ENCODE measurements at regions of chr11 and their contacts with region 1.

Region 1: GRCh38 chr11:35237860-35238715 is 99.1 kb downstream of the CD44 start:
- DNase-seq: peak; percentile 35
- ATAC-seq: peak; percentile 70
- H3K4me3 ChIP-seq: no peak overlapping the region
- H3K27ac ChIP-seq: no peak overlapping the region
- H3K4me1 ChIP-seq: peaks cover 19% of the 10 kb centered on the region
- H3K27me3 ChIP-seq: no peaks in the 10 kb centered on the region
- CTCF ChIP-seq: peak; percentile 73 to 82 (median 82)
- EP300 ChIP-seq: no peak
- POLR2A ChIP-seq: no peak
- RAD21 ChIP-seq: peak; percentile 84

Region 2: GRCh38 chr11:34791780-34792542 is 446.1 kb before region 1 on chr11:
- CTCF ChIA-PET with region 1: no interaction called
- POLR2A ChIA-PET with region 1: no interaction called
- RAD21 ChIA-PET with region 1: no interaction called
- SMC1A ChIA-PET with region 1: no interaction called
- in situ Hi-C with region 1: no loop called
- intact Hi-C with region 1: no loop called
- DNase-seq: no peak
- ATAC-seq: no peak
- H3K4me3 ChIP-seq: no peak overlapping the region
- H3K27ac ChIP-seq: no peak overlapping the region
- H3K4me1 ChIP-seq: no peaks in the 10 kb centered on the region
- H3K27me3 ChIP-seq: no peaks in the 10 kb centered on the region
- CTCF ChIP-seq: no peak
- EP300 ChIP-seq: no peak
- POLR2A ChIP-seq: no peak
- RAD21 ChIP-seq: no peak

Region 3: DNA sequence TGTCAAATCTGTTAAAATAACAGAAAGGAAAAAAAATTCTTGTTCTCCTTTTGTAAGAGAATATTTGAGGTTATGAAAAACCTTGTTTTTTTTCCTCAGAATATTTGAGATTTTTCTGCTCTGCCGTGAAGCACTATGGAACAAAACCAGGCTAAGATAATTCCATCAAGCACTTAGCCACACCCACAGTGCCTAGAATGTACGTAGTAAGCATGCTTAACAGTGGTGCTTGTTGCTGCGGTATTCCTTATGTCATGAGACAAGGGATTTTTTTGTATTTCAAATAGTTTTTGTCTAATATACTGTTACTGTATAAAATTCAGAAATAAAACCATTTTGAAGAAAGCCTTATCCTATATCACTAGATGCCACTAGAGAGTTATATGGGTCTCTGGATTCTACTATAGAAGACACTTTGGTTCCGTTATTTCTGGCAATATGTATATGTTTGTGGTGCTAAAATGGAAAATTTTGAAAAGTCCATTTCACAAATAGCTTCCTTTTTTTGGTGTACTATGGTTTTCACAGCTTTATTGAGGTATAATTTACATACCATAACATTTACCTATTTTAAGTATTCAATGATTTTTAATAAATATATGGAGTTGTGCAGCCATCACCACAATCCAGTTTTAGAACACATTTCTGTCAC is 297.9 kb before region 1 on chr11:
- CTCF ChIA-PET with region 1: interaction called, 5 read pairs
- POLR2A ChIA-PET with region 1: no interaction called
- RAD21 ChIA-PET with region 1: interaction called, 3 read pairs
- SMC1A ChIA-PET with region 1: interaction called, 11 read pairs
- in situ Hi-C with region 1: no loop called
- intact Hi-C with region 1: no loop called
- DNase-seq: no peak
- ATAC-seq: peak; percentile 61
- H3K4me3 ChIP-seq: no peak overlapping the region
- H3K27ac ChIP-seq: no peak overlapping the region
- H3K4me1 ChIP-seq: no peaks in the 10 kb centered on the region; the same call in 1 of the 2 replicates
- H3K27me3 ChIP-seq: no peaks in the 10 kb centered on the region
- CTCF ChIP-seq: peak in 2 of 3 experiments; percentile 8 to 27; a peak in 1 of 6 replicates
- EP300 ChIP-seq: no peak
- POLR2A ChIP-seq: no peak
- RAD21 ChIP-seq: peak; percentile 46

Region 4: GRCh38 chr11:35257281-35257680 is 19.2 kb after region 1 on chr11:
- CTCF ChIA-PET with region 1: interaction called, 11 read pairs
- POLR2A ChIA-PET with region 1: no interaction called
- RAD21 ChIA-PET with region 1: interaction called, 8 read pairs
- SMC1A ChIA-PET with region 1: interaction called, 7 read pairs
- in situ Hi-C with region 1: no loop called
- intact Hi-C with region 1: no loop called
- DNase-seq: peak; percentile 55
- ATAC-seq: peak; percentile 100
- H3K4me3 ChIP-seq: 0 out of 2 replicates have a peak overlapping the region, but pooled peaks have one; percentile 39
- H3K27ac ChIP-seq: no peak overlapping the region
- H3K4me1 ChIP-seq: peaks cover 11% of the 10 kb centered on the region
- H3K27me3 ChIP-seq: no peaks in the 10 kb centered on the region
- CTCF ChIP-seq: no peak
- EP300 ChIP-seq: no peak
- POLR2A ChIP-seq: no peak
- RAD21 ChIP-seq: no peak

Region 5: GRCh38 chr11:35272391-35272902 is 34.4 kb after region 1 on chr11:
- CTCF ChIA-PET with region 1: interaction called, 4 read pairs
- POLR2A ChIA-PET with region 1: no interaction called
- RAD21 ChIA-PET with region 1: interaction called, 20 read pairs
- SMC1A ChIA-PET with region 1: interaction called, 11 read pairs
- in situ Hi-C with region 1: no loop called
- intact Hi-C with region 1: no loop called
- DNase-seq: peak; percentile 95
- ATAC-seq: peak; percentile 94
- H3K4me3 ChIP-seq: 0 out of 2 replicates have a peak overlapping the region, but pooled peaks have one; percentile 7
- H3K27ac ChIP-seq: peak overlapping the region; percentile 56
- H3K4me1 ChIP-seq: peaks cover 22% of the 10 kb centered on the region
- H3K27me3 ChIP-seq: no peaks in the 10 kb centered on the region
- CTCF ChIP-seq: peak; percentile 5 to 12 (median 10); a peak in 3 of 6 replicates
- EP300 ChIP-seq: peak; percentile 57 to 70; a peak in 2 of 4 replicates
- POLR2A ChIP-seq: no peak
- RAD21 ChIP-seq: peak; percentile 22; the same call in 1 of the 2 replicates

Region 6: DNA sequence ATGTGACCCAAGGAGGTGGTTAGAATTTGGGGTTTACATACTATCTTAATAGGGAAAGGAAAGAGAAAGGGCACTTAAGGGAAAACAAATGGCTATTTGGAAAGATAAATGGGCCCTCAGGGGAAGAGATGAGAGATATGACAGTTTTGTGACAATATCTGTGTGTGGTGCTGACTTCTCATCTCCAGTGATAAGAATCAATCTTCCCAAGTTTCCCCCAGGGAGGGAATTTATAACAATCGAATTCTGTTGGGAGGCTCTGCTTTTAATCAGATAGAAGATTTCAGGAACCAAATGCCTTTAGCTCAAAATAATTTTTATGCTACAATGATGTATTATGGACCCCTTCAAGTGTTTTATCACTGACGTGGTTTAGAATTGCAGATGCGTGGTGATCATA is 333.6 kb after region 1 on chr11:
- CTCF ChIA-PET with region 1: no interaction called
- POLR2A ChIA-PET with region 1: no interaction called
- RAD21 ChIA-PET with region 1: no interaction called
- SMC1A ChIA-PET with region 1: no interaction called
- in situ Hi-C with region 1: no loop called
- intact Hi-C with region 1: no loop called
- DNase-seq: no peak
- ATAC-seq: no peak
- H3K4me3 ChIP-seq: no peak overlapping the region
- H3K27ac ChIP-seq: no peak overlapping the region
- H3K4me1 ChIP-seq: no peaks in the 10 kb centered on the region
- H3K27me3 ChIP-seq: no peaks in the 10 kb centered on the region; a peak in 2 of 4 replicates
- CTCF ChIP-seq: no peak
- EP300 ChIP-seq: no peak
- POLR2A ChIP-seq: no peak
- RAD21 ChIP-seq: no peak